ENCODE measurements at regions of chr2 and their contacts with region 1.

Region 1: DNA sequence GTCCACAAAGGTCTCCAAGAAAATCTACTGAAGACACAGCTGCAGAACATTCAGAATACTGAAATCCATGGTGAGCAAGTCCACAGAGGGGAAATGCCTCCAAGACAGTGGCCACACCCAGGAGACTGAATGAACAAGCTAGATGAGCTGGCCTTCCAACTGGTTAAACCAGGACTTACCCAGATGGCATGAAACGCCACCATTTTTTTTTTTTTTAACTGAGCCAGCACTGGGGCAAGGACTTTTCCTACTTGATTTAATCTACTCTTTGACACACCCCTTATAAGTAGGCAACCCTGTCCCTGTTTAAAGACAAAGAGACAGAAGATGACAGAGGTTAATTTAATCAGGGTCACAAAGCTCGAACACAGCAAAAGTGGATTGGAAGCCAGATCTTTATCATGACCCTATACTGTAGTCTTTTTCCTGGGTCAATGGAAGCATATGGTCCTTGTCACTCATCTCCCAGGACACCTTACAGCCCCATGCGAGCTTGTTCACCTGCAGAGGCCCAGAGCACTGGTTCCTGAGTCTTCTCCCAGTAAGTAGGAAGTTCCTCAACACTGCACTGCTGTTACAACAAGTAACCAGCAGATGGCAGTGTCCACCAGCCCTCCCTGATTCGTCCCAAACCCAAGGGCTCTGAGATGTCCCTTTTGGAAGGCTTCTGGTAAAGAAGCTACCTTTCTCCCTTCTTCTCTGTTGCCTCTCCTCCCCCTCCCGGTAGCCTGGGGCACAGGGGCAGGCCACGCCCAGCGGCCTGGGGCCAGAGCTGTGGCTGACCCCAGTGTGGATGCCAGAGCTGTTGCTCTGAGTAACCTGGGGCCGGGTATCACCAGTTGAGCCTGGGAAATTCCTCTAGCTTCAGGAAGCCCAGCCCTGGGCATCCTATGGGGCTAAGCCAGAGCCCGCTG is 5.6 kb upstream of the GDF7 start:
- DNase-seq: peak; percentile 53
- ATAC-seq: peak; percentile 77
- H3K4me3 Mint-ChIP-seq: no peak overlapping the region
- H3K27ac Mint-ChIP-seq: no peak overlapping the region
- H3K4me1 Mint-ChIP-seq: peaks cover 16% of the 10 kb centered on the region
- H3K27me3 Mint-ChIP-seq: peaks cover 16% of the 10 kb centered on the region
- CTCF ChIP-seq: peak; percentile 63

Region 2: GRCh38 chr2:20456636-20457426 is 204.5 kb before region 1 on chr2:
- CTCF ChIA-PET with region 1: no interaction called
- POLR2A ChIA-PET with region 1: no interaction called
- intact Hi-C with region 1: no loop called
- DNase-seq: no peak
- ATAC-seq: no peak
- H3K4me3 Mint-ChIP-seq: no peak overlapping the region
- H3K27ac Mint-ChIP-seq: no peak overlapping the region
- H3K4me1 Mint-ChIP-seq: no peaks in the 10 kb centered on the region
- H3K27me3 Mint-ChIP-seq: peaks cover 32% of the 10 kb centered on the region
- CTCF ChIP-seq: no peak

Region 3: GRCh38 chr2:20675701-20676352 is 14.5 kb after region 1 on chr2:
- CTCF ChIA-PET with region 1: interaction called, 69 read pairs
- POLR2A ChIA-PET with region 1: interaction called, 116 read pairs
- intact Hi-C with region 1: loop called (anchors 2 kb)
- DNase-seq: peak; percentile 51
- ATAC-seq: peak; percentile 82
- H3K4me3 Mint-ChIP-seq: peak overlapping the region; percentile 64
- H3K27ac Mint-ChIP-seq: peak overlapping the region; percentile 94
- H3K4me1 Mint-ChIP-seq: peaks cover 73% of the 10 kb centered on the region
- H3K27me3 Mint-ChIP-seq: no peaks in the 10 kb centered on the region
- CTCF ChIP-seq: no peak

Region 4: GRCh38 chr2:20781656-20782265 is 120.4 kb after region 1 on chr2:
- CTCF ChIA-PET with region 1: interaction called, 14 read pairs
- POLR2A ChIA-PET with region 1: interaction called, 3 read pairs
- intact Hi-C with region 1: no loop called
- DNase-seq: no peak
- ATAC-seq: no peak
- H3K4me3 Mint-ChIP-seq: no peak overlapping the region
- H3K27ac Mint-ChIP-seq: no peak overlapping the region
- H3K4me1 Mint-ChIP-seq: no peaks in the 10 kb centered on the region
- H3K27me3 Mint-ChIP-seq: no peaks in the 10 kb centered on the region
- CTCF ChIP-seq: no peak

Region 5: GRCh38 chr2:21042958-21043743 is 381.8 kb after region 1 on chr2:
- CTCF ChIA-PET with region 1: no interaction called
- POLR2A ChIA-PET with region 1: no interaction called
- intact Hi-C with region 1: loop called (anchors 2 kb)
- DNase-seq: peak; percentile 39
- ATAC-seq: peak; percentile 61
- H3K4me3 Mint-ChIP-seq: peak overlapping the region; percentile 35
- H3K27ac Mint-ChIP-seq: no peak overlapping the region
- H3K4me1 Mint-ChIP-seq: peaks cover 3% of the 10 kb centered on the region
- H3K27me3 Mint-ChIP-seq: peaks cover 31% of the 10 kb centered on the region
- CTCF ChIP-seq: peak; percentile 94

Region 6: DNA sequence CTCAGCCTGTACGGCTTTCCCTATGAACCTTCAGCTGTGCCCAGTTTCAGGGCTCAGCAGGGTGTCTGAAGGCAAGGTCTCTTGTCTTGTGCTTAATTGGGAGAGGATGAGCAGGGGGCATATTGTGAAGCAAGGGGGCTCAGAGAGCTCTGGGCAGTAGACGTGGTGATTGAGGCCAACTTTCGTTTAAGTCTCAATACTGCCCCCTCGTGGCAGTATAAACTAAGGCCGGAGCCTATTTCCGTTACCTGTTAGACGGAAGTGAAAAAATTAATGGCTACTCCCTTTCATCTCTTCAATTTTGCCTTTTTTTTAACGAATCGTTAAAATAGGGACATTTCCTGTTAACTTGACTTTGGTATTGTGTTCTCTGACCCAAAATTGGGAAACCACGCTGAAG is 655.8 kb after region 1 on chr2:
- CTCF ChIA-PET with region 1: no interaction called
- POLR2A ChIA-PET with region 1: no interaction called
- intact Hi-C with region 1: loop called (anchors 2 kb)
- DNase-seq: no peak
- ATAC-seq: no peak
- H3K4me3 Mint-ChIP-seq: no peak overlapping the region
- H3K27ac Mint-ChIP-seq: no peak overlapping the region
- H3K4me1 Mint-ChIP-seq: no peaks in the 10 kb centered on the region
- H3K27me3 Mint-ChIP-seq: no peaks in the 10 kb centered on the region
- CTCF ChIP-seq: no peak

Measured in activated B cell treated with CpG ODN at 0.5 μM for 24 hours (primary cell).